Left ventricle myocardium superior (tissue), 1 donor: ENCODE measurements at regions of chr11 and their contacts with region 1.

Region 1: GRCh38 chr11:66694732-66695207 is 17.1 kb upstream of the RBM4B start:
- DNase-seq: peak; percentile 88
- ATAC-seq: peak; percentile 89

Region 2: DNA sequence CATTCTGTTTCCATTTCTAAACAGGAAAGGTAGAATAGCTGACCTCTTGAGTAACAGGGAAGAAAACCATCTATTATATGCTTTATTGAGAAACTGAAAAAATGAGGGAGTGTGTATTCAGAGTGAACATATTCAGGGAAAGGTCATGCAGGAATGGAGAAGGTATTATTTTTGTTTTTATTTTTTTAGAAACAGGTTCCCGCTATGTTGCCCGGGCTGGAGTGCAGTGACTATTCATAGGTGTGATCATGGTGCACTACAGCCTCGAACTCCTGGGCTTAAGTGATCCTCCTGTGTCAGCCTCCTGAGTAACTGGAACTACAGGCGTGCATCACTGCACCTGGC is 139.7 kb after region 1 on chr11:
- intact Hi-C with region 1: loop called (anchors 5 kb)
- DNase-seq: no peak
- ATAC-seq: peak; percentile 15